Activated T-helper 1 cell treated with anti-CD3 and anti-CD28 coated beads, Interleukin-12 subunit alpha, Interleukin-12 subunit beta, Interleukin-2, Interleukin-4 antibody, amounts not matched to agents 30 ng/mL and 10 ng/mL and 1 ng/mL, durations not matched to agents 14 hours and 24 hours and 36 hours (primary cell): ENCODE measurements at regions of chr9 and their contacts with region 1.

Region 1: GRCh38 chr9:99057665-99058625 is 47.0 kb upstream of the TGFBR1 start:
- DNase-seq: peak; percentile 79
- H3K4me3 Mint-ChIP-seq: peak overlapping the region; percentile 83
- H3K27ac Mint-ChIP-seq: peak overlapping the region; percentile 92
- H3K4me1 Mint-ChIP-seq: peaks cover 72% of the 10 kb centered on the region
- H3K27me3 Mint-ChIP-seq: no peaks in the 10 kb centered on the region

Region 2: GRCh38 chr9:98766586-98766985 is 291.4 kb before region 1 on chr9:
- intact Hi-C with region 1: no loop called
- DNase-seq: no peak
- H3K4me3 Mint-ChIP-seq: no peak overlapping the region
- H3K27ac Mint-ChIP-seq: no peak overlapping the region
- H3K4me1 Mint-ChIP-seq: no peaks in the 10 kb centered on the region
- H3K27me3 Mint-ChIP-seq: no peaks in the 10 kb centered on the region

Region 3: GRCh38 chr9:99000469-99001395 is 57.2 kb before region 1 on chr9:
- intact Hi-C with region 1: loop called (anchors 1 kb)
- DNase-seq: peak; percentile 44
- H3K4me3 Mint-ChIP-seq: no peak overlapping the region
- H3K27ac Mint-ChIP-seq: no peak overlapping the region
- H3K4me1 Mint-ChIP-seq: peaks cover 27% of the 10 kb centered on the region
- H3K27me3 Mint-ChIP-seq: peaks cover 16% of the 10 kb centered on the region

Region 4: DNA sequence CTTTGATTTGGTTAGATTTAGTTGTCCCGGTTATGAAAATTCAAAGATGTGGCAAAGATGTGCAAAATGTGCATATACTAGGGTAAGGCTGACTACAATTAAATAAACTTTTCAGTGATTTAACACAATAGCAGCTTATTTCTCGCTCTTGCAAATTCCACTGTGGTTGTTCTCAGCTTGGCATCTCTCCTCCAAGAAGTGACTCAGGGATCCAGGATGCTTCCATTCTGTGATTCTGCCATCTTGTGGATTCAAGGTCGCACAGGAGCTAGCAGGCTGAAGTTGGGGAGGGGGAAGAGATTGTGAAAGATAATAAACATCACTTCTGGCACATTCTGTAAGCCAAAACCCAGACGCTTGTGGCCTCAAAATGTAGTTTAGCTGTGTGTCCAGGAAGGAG is 13.1 kb before region 1 on chr9:
- intact Hi-C with region 1: loop called (anchors 2 kb)
- DNase-seq: no peak
- H3K4me3 Mint-ChIP-seq: no peak overlapping the region
- H3K27ac Mint-ChIP-seq: peak overlapping the region; percentile 81
- H3K4me1 Mint-ChIP-seq: peaks cover 75% of the 10 kb centered on the region
- H3K27me3 Mint-ChIP-seq: no peaks in the 10 kb centered on the region

Region 5: DNA sequence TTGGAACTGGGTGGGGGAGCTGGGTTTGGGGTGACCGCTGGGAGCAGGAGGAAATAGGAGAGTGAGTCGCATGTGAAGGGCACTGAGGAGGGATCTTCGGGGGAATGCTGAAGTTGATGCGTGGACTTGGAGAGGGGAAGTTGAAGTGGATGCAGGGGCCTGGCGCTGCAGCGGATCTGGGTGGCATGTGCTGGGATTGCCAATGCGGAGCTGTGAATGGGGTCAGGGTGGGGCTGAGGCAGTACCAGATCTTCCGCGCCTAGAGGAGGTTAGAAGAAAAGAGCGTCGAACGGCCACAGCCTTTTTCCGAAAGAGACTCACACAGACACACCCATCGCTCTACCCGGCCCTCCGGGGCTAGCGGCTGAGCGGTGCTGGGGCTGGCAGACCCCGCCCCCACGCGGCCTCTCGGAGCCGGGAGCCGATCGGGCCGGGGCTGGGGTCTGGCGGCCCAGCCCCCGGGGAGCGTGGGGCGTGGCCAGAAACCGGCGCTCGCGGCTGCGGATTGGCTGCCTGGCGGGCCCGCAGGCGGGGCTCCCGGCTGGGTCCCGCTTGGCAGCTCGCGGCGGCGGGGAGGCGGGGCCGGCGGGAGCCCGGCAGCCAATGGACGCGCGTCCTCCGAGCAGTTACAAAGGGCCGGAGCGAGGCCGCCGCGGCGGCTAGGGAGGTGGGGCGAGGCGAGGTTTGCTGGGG is 46.7 kb after region 1 on chr9 and contains the start of gene TGFBR1:
- intact Hi-C with region 1: loop called (anchors 1 kb)
- DNase-seq: peak; percentile 97
- H3K4me3 Mint-ChIP-seq: peak within 1 kb of the TSS; percentile 85
- H3K27ac Mint-ChIP-seq: peak within 1 kb of the TSS; percentile 83
- H3K4me1 Mint-ChIP-seq: peaks cover 65% of the 10 kb centered on the region
- H3K27me3 Mint-ChIP-seq: no peaks in the 10 kb centered on the region
- total RNA-seq, gene TGFBR1: 38.5 and 42.6 TPM in 2 replicates

Region 6: DNA sequence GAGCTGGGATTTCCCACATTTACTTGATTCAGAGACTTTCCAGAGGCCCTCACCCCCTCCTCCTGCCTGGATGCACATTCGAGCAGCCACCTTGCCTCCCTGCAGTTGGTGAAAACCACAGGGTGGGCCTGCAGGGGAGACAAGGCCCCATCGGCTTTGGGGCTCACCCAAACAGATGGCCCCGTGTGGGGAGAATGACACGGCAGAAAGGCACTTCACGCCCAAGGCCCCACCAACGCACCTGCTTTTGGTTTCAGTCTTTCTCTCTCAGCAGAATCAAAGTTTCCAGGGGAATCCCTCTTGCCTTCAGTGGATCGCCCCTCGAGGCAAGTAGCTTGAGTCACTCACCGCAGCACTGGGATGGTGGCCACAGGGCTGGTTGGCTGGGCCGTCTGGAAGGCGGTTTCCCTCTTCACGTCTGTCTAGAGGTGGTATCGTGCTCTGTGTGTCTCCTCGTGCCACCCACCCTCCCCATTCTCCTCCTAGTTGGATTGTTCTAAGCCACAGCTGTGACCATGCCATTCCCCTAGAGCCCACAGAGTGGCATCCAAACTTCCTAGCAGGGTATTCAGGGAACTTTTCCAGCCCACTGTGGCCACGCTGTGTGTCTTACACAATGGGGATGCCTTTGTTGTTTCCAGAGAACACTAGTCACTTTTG is 196.0 kb after region 1 on chr9:
- intact Hi-C with region 1: loop called (anchors 5 kb)
- DNase-seq: peak; percentile 82
- H3K4me3 Mint-ChIP-seq: peak overlapping the region; percentile 55
- H3K27ac Mint-ChIP-seq: peak overlapping the region; percentile 92
- H3K4me1 Mint-ChIP-seq: peaks cover 62% of the 10 kb centered on the region
- H3K27me3 Mint-ChIP-seq: no peaks in the 10 kb centered on the region